Tibial artery (tissue), 4 donors: ENCODE measurements at regions of chr1 and their contacts with region 1.

Region 1: DNA sequence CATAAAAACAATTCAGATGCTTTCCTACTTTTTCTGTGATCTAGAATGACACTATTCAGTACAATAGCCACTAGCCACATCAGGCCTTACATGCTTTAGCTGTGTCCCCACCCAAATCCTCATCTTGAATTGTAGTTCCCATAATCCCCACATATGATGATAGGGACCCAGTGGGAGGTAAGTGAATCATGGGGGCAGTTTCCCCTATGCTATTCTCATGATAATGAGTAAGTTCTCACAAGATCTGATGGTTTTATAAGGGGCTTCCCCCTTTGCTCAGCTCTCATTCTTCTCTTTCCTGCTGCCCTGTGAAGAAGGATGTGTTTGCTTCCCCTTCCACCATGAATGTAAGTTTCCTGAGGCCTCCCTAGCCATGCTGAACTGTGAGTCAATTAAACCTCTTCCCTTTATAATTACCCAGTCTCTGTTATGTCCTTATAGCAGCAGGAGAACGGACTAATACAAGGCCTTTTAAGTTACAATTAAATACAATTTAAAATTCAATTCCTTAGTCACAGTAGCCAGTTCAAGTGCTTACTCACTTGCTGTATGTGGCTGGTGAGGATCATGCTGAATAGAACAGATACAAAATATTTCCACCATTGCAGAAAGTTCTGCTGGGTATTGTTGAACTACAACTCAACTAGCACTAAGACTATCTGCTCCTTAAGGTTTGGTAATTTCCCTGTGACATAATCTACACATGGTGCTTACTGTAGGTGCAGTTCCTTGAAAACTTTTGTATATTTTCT is 106.7 kb downstream of the SCMH1 start:
- DNase-seq: no peak
- H3K4me3 ChIP-seq: no peak overlapping the region
- H3K27ac ChIP-seq: no peak overlapping the region
- H3K4me1 ChIP-seq: no peaks in the 10 kb centered on the region
- H3K27me3 ChIP-seq: no peaks in the 10 kb centered on the region
- CTCF ChIP-seq: no peak

Region 2: DNA sequence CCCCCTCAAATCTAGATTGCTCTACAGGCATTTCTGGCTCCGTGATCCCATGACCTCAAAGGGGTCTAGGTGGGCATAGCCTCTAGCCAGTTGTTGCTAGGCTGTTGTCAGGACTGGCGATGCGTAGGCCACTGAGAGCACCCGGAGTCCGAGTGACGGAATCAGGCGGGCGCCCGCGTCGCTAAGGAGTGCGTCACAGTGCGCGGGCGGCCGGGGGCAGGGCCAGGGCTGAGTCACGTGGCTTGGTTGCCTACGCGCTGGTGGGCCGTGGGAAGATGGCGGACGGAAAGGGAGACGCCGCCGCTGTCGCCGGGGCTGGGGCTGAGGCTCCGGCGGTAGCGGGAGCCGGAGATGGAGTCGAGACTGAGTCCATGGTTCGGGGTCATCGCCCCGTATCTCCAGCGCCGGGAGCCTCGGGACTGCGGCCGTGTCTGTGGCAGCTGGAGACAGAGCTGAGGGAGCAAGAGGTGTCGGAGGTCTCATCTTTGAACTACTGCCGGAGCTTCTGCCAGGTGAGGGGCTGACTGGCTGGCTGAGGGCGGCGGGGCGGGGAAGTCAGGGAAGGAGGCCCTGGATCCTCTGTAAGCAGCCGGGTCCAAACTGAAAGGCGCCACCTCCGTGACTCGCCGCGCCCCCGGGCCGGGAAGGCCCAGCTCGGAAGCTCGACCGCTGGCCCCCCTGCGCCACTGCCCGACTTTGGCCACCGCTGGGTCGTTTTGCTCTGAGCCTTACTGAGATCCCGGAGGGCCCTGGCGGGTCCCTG is 974.1 kb before region 1 on chr1 and contains the start of gene RLF:
- intact Hi-C with region 1: no loop called
- DNase-seq: peak; percentile 94 to 97
- H3K4me3 ChIP-seq: peak within 1 kb of the TSS; percentile 88 to 96
- H3K27ac ChIP-seq: peak within 1 kb of the TSS; percentile 98 to 99
- H3K4me1 ChIP-seq: peaks cover 0 to 38% (median 22%) of the 10 kb centered on the region in 4 donors
- H3K27me3 ChIP-seq: no peaks in the 10 kb centered on the region
- CTCF ChIP-seq: peak in 1 of 2 experiments; percentile 4

Region 3: DNA sequence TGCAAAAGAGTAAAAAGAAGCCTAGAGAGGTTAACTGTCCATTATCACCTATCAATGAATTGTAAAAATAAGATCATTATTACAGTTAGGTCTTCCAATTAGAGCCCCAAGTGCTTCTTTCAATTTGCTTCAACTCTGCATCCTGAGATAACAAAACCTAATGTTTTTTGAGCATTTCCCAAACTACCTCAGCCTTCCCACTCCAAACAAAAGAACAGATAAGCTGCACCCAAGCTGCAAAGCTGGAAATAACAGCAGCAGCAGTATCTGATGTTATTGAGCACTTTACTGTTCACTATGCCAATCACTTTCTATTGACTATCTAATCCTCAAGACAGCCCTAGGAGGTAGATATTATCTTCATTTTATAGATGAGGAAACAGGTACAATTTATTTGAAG is 16.7 kb before region 1 on chr1:
- intact Hi-C with region 1: loop called (anchors 1 kb)
- DNase-seq: no peak
- H3K4me3 ChIP-seq: no peak overlapping the region
- H3K27ac ChIP-seq: no peak overlapping the region
- H3K4me1 ChIP-seq: peaks cover 0 to 4% (median 1%) of the 10 kb centered on the region in 4 donors
- H3K27me3 ChIP-seq: no peaks in the 10 kb centered on the region
- CTCF ChIP-seq: no peak